ENCODE measurements at regions of chr21 and their contacts with region 1.

Region 1: GRCh38 chr21:31665397-31665796 is 5.9 kb downstream of the SOD1 start:
- DNase-seq: peak in 5 of 7 donors; percentile 34 to 62 (median 51)
- H3K4me3 ChIP-seq: no peak overlapping the region
- H3K27ac ChIP-seq: peak overlapping the region in 2 of 5 donors; percentile 23 to 38
- H3K4me1 ChIP-seq: peaks cover 7 to 90% of the 10 kb centered on the region in 2 donors
- H3K27me3 ChIP-seq: no peaks in the 10 kb centered on the region
- CTCF ChIP-seq: no peak
- POLR2A ChIP-seq: no peak

Region 2: DNA sequence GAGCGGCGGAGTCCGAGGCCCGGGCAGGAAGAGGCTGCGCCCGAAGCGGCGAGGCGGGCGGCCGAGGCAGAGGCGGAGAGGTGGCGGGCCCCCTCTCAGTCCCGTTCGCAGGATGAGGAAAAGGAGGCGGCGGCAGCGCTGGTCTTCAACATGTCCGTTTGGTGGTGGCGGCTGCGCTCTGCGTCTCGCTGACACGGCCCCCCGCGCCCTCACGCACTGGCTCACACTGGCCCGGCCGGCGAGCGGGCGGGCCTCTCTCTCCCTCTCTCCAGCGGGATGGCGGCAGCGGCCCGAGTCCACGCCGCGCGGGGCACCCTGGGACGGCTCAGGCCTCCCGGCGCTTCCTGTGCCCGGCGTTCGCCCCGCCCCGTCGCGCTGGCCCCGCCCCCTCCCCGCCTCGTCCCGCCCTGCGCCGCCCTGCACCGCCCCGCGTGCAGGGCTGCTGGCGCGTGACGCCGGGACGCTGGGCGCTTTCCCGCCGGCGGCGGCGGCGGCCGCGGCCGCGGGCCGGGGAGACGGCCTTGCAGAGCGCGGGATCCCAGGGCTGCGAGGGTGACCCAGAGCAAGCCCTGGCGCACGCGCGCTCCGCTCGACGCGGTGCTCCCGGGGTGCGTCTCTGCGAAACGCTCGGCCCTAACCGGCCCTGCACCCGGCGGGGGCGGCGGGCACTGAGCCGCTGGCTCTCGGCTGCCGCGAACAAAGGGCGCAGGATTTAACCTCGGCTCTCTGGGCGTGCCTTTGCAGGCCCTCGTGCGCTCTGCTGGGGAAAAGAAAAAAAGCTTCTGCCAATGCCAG is 66.6 kb after region 1 on chr21 and contains the start of gene SCAF4:
- intact Hi-C with region 1: loop called in 1 of 2 experiments (anchors 5 kb)
- DNase-seq: peak; percentile 91 to 95 (median 91)
- H3K4me3 ChIP-seq: peak within 1 kb of the TSS; percentile 88 to 99 (median 90)
- H3K27ac ChIP-seq: peak within 1 kb of the TSS; percentile 83 to 99 (median 95)
- H3K4me1 ChIP-seq: peaks cover 0 to 41% of the 10 kb centered on the region in 2 donors
- H3K27me3 ChIP-seq: no peaks in the 10 kb centered on the region
- CTCF ChIP-seq: peak in 1 of 6 experiments; percentile 7
- POLR2A ChIP-seq: peak; percentile 87 to 95
- total RNA-seq, gene SCAF4: 9.5 to 24.0 (median 14.4) TPM

Region 3: GRCh38 chr21:31855150-31855549 is 189.8 kb after region 1 on chr21:
- intact Hi-C with region 1: no loop called
- DNase-seq: no peak
- H3K4me3 ChIP-seq: no peak overlapping the region
- H3K27ac ChIP-seq: no peak overlapping the region
- H3K4me1 ChIP-seq: no peaks in the 10 kb centered on the region
- H3K27me3 ChIP-seq: no peaks in the 10 kb centered on the region
- CTCF ChIP-seq: no peak
- POLR2A ChIP-seq: no peak

Measured in adrenal gland (tissue), 19 donors.